Ascending aorta (tissue), 2 donors: ENCODE measurements at regions of chr11 and their contacts with region 1.

Region 1: DNA sequence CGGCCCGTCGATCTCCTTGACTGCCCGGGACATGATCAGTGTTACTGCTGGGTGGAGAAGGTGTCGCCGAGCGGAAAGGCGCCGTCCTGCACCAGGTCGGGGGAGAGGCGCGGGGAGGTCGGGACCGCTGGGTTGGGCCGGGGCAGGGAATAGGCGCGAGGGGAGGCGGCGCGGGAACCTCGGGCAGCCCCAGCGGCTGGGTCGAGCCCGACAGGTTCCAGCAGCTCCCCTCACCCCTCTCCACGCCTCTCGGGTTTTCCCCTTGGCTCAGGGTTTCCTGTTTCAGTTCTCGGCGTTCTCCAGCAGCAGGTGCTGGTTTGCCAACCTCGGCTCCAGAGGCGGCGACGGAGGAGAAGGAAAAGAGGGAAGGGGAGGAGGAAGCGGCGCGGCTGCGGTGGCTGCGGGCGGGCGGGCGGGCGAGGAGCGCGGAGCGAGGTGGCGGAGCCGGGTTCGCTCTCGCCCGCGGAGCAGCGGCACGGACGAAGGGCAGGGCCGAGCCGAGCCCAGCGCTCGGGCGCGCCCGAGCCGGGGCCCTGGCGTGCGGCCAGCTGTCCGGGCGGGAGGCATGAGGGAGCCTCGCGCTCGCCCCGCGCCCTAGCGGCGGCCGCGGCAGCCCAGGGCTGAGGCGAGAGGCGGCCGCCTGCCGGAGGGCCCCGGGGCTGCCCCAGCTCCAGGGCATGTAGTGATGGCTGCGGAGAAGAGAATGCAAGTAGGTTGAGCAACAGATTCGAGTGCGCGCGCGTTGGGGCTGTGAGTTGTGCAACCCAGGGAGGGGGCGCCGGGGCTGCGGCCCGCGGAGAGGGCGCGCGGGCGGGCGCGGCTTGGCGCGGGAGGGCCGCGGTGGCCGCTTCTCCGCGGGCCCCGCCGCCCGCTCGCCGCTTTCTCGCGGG is at the start of gene ZC3H12C:
- DNase-seq: peak; percentile 16 to 91
- H3K4me3 ChIP-seq: peak within 1 kb of the TSS; percentile 85 to 90
- H3K27ac ChIP-seq: peak within 1 kb of the TSS; percentile 99 to 100
- H3K4me1 ChIP-seq: peaks cover 0 to 15% of the 10 kb centered on the region in 2 donors
- H3K27me3 ChIP-seq: no peaks in the 10 kb centered on the region
- CTCF ChIP-seq: peak; percentile 28 to 81 (median 32)
- total RNA-seq, gene ZC3H12C: 6.3 TPM

Region 2: DNA sequence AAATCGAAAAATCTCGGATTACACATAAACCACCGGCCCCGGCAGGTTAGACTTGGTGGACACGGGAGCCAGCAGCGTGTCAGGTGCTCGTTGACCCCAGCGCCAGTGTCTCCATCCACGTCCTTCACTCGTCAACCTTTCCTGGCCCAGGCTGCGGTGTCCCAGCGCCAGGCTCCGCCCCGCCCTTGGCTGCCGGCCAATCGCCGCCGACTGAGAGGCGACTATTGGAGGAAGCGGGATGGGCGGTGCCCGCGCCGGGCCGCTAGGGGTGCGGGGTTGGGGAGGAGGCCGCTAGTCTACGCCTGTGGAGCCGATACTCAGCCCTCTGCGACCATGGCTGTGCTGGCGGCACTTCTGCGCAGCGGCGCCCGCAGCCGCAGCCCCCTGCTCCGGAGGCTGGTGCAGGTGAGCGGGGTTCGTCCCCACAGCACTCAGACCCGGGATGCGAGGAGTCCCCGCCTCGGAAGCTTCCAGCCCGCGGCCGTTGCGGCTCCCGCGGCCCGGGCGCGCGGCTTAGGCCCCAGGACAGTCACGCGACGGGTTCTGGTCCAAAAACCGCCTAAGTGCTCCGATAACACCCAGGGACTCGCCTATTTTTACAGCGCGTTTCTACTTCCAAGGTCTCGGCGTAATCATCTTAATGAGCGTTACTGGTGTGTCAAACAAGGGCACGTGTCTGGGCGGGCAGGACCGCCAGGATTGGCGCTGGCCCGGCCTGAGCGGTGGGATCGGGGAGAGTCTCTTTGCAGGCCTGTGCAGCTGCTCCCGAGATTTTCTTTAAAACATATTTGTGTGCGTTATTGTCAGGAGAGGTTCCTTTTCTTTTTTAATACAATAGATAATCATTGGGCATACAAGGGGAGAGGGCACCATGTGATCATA is 1971.2 kb before region 1 on chr11 and contains the start of gene ACAT1:
- intact Hi-C with region 1: loop called (anchors 5 kb)
- DNase-seq: peak; percentile 96 to 99
- H3K4me3 ChIP-seq: peak within 1 kb of the TSS; percentile 84 to 92
- H3K27ac ChIP-seq: peak within 1 kb of the TSS; percentile 96 to 97
- H3K4me1 ChIP-seq: peaks cover 0 to 20% of the 10 kb centered on the region in 2 donors
- H3K27me3 ChIP-seq: no peaks in the 10 kb centered on the region
- CTCF ChIP-seq: peak in 2 of 3 experiments; percentile 9 to 39
- total RNA-seq, gene ACAT1: 187 TPM

Region 3: DNA sequence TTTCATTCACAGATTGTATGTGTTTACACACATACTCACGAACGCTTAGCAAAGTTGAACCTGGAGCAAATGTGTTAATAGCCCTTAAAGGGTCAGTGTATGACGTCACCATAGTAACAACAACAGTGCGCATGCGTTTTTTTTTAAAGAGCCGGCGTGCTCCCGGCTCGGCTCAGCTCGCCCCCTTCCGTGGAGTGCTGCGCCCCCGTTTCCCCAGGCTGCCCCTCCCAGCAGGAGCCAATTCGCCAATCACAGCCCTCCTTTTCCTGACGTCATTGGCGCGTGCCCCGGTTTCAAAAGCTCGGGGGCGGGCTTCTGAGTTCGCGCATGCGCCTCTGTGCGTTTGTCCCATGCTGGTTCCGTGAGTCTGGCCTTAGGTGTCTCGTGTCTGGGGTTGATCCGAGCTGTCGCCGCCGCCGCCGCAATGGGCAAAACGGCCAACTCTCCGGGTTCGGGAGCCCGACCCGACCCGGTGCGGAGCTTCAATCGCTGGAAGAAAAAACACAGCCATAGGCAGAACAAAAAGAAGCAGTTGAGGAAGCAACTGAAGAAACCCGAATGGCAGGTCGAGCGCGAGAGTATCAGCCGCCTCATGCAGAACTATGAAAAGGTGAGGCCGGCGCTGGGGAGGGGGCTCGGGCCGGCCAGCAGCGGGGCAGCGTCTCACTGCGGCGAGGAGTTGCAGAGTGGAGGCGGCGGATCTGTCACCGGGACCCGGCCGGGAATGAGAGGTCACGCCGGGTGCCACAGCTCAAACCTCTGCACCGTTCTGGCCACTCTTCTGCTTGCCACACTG is 1427.8 kb before region 1 on chr11 and contains the start of gene DDX10:
- intact Hi-C with region 1: loop called (anchors 10 kb)
- DNase-seq: peak; percentile 87 to 99
- H3K4me3 ChIP-seq: peak within 1 kb of the TSS; percentile 63 to 88
- H3K27ac ChIP-seq: peak within 1 kb of the TSS; percentile 37 to 65
- H3K4me1 ChIP-seq: peaks cover 8 to 21% of the 10 kb centered on the region in 2 donors
- H3K27me3 ChIP-seq: no peaks in the 10 kb centered on the region
- CTCF ChIP-seq: no peak
- total RNA-seq, gene DDX10: 21.9 TPM

Region 4: GRCh38 chr11:109984634-109985289 is 108.0 kb before region 1 on chr11:
- intact Hi-C with region 1: no loop called
- DNase-seq: no peak
- H3K4me3 ChIP-seq: no peak overlapping the region
- H3K27ac ChIP-seq: no peak overlapping the region
- H3K4me1 ChIP-seq: no peaks in the 10 kb centered on the region
- H3K27me3 ChIP-seq: no peaks in the 10 kb centered on the region
- CTCF ChIP-seq: no peak

Region 5: GRCh38 chr11:110000031-110000502 is 92.7 kb before region 1 on chr11:
- intact Hi-C with region 1: loop called (anchors 2 kb)
- DNase-seq: peak in 1 of 2 donors; percentile 66
- H3K4me3 ChIP-seq: no peak overlapping the region
- H3K27ac ChIP-seq: peak overlapping the region; percentile 10 to 45
- H3K4me1 ChIP-seq: peaks cover 0 to 6% of the 10 kb centered on the region in 2 donors
- H3K27me3 ChIP-seq: no peaks in the 10 kb centered on the region
- CTCF ChIP-seq: no peak

Region 6: GRCh38 chr11:110376711-110377324 is 284.1 kb after region 1 on chr11:
- intact Hi-C with region 1: loop called (anchors 5 kb)
- DNase-seq: peak; percentile 39 to 79
- H3K4me3 ChIP-seq: peak overlapping the region in 1 of 2 donors; percentile 24
- H3K27ac ChIP-seq: peak overlapping the region in 1 of 2 donors; percentile 29
- H3K4me1 ChIP-seq: peaks cover 0 to 6% of the 10 kb centered on the region in 2 donors
- H3K27me3 ChIP-seq: no peaks in the 10 kb centered on the region
- CTCF ChIP-seq: peak; percentile 41 to 81 (median 71)